Adrenal gland (tissue), 19 donors: ENCODE measurements at regions of chr1 and their contacts with region 1.

Region 1: DNA sequence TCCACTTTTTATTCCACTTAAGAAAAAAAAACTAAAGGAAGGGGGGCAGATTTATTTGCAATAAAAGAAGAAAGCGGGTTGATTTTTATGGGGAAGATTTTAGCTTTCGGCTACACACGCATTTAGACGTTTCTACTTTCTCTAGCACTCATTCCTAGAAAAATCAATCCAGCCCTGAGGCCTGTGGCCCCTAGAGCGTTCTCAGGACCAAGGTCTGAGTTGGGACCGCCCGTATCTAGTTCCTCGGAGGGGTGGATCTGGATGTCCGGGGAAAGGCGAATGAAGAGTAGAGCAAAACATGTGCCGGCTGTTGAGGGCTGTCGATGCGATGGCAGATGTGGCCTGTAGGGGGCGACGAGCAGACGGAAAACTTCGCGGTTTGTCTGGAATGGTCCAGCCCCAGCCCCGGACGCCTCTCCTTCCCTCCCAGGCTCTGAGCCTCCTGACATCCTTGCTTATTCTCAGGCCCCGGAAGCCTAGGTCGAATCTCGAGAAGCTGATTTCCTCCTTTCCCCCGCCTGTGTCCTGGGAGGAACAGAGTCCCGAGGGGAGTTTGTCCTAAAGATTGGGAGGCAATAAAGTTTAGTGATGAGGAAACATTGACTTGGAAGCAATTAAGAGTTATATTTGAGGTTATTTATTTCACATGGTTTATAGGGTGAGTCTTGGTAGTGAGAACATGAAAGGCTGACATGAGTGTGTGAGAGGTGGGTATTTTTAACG is 5.2 kb downstream of the FOXD3 start:
- DNase-seq: peak; percentile 20 to 65 (median 46)
- H3K4me3 ChIP-seq: no peak overlapping the region
- H3K27ac ChIP-seq: no peak overlapping the region
- H3K4me1 ChIP-seq: peaks cover under 1 to 5% of the 10 kb centered on the region in 2 donors
- H3K27me3 ChIP-seq: peaks cover 98% of the 10 kb centered on the region
- CTCF ChIP-seq: peak; percentile 30 to 65 (median 53)
- POLR2A ChIP-seq: no peak

Region 2: DNA sequence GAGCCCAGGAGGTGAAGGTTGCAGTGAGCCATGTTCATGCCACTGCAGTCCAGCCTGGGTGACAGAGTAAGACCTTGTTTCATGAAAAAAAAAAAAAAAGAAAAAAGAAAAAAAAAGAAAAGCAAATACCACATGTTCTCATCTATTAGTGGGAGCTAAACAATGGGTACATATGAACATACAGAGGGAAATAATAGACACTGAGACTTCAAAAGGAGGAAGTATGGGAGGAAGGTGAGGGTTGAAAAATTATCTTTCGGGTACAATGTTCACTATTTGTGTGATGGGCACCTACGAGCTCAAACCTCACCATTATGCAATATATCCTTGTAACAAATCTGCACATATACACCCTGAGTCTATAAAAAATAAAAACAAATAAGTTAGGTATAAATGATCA is 189.1 kb after region 1 on chr1:
- intact Hi-C with region 1: no loop called
- DNase-seq: no peak
- H3K4me3 ChIP-seq: no peak overlapping the region
- H3K27ac ChIP-seq: no peak overlapping the region
- H3K4me1 ChIP-seq: no peaks in the 10 kb centered on the region
- H3K27me3 ChIP-seq: no peaks in the 10 kb centered on the region
- CTCF ChIP-seq: no peak
- POLR2A ChIP-seq: no peak

Region 3: GRCh38 chr1:63537940-63538339 is 210.4 kb after region 1 on chr1:
- intact Hi-C with region 1: loop called in 1 of 2 experiments (anchors 5 kb)
- DNase-seq: no peak
- H3K4me3 ChIP-seq: no peak overlapping the region
- H3K27ac ChIP-seq: no peak overlapping the region
- H3K4me1 ChIP-seq: no peaks in the 10 kb centered on the region
- H3K27me3 ChIP-seq: no peaks in the 10 kb centered on the region
- CTCF ChIP-seq: peak in 5 of 6 experiments; percentile 16 to 53 (median 45)
- POLR2A ChIP-seq: no peak